ENCODE measurements at regions of chr20 and their contacts with region 1.

Region 1: DNA sequence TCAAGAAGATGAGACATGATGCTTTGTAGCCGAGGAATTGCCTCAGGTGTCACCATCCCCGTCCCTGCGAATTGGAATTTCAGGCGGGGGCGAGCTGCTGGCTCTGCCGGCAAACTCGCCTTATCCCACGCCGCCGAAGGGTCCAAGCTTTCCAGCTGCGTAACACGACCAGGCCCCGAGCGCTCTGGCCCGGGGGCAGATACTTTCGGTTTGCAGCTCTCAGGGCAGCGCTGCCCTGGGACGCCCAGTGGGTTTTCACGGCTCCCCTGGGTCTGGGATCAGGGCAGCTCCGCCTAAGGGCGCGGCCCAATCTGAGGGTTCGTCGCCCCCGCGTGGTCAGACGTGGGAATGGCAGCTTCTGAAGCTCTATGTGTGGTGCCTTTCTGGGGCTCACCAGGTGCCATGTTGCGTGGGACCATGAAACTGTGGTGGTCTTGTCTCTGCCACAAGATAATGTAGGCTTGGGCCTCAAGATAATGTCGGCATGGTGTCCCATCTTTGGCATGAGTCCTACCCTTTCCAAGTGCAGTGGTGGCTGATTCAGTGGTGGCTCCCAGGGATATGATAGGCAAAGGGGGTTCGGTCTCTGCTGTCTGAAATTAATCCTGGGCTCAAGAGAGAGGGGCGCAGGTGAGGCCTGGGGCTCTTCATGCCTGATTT is 20.9 kb downstream of the PIGT start:
- DNase-seq: peak; percentile 91
- H3K4me3 Mint-ChIP-seq: peak overlapping the region; percentile 64
- H3K27ac Mint-ChIP-seq: no peak overlapping the region
- H3K4me1 Mint-ChIP-seq: peaks cover 10% of the 10 kb centered on the region
- H3K27me3 Mint-ChIP-seq: no peaks in the 10 kb centered on the region

Region 2: GRCh38 chr20:45311589-45312211 is 125.2 kb before region 1 on chr20:
- CTCF ChIA-PET with region 1: interaction called, 116 read pairs
- intact Hi-C with region 1: no loop called
- DNase-seq: peak; percentile 73
- H3K4me3 Mint-ChIP-seq: no peak overlapping the region
- H3K27ac Mint-ChIP-seq: no peak overlapping the region
- H3K4me1 Mint-ChIP-seq: peaks cover 10% of the 10 kb centered on the region
- H3K27me3 Mint-ChIP-seq: peaks cover 54% of the 10 kb centered on the region

Region 3: GRCh38 chr20:45347936-45348778 is 88.7 kb before region 1 on chr20 and contains the start of gene SDC4:
- CTCF ChIA-PET with region 1: interaction called, 20 read pairs
- intact Hi-C with region 1: no loop called
- DNase-seq: peak; percentile 68
- H3K4me3 Mint-ChIP-seq: peak within 1 kb of the TSS; percentile 80
- H3K27ac Mint-ChIP-seq: peak within 1 kb of the TSS; percentile 77
- H3K4me1 Mint-ChIP-seq: peaks cover 38% of the 10 kb centered on the region
- H3K27me3 Mint-ChIP-seq: no peaks in the 10 kb centered on the region
- total RNA-seq, gene SDC4: 28.4 to 31.4 TPM

Region 4: GRCh38 chr20:45415774-45416637 is 20.9 kb before region 1 on chr20 and contains the start of gene PIGT:
- CTCF ChIA-PET with region 1: interaction called, 9 read pairs
- intact Hi-C with region 1: loop called (anchors 1 kb)
- DNase-seq: peak; percentile 92
- H3K4me3 Mint-ChIP-seq: peak within 1 kb of the TSS; percentile 93
- H3K27ac Mint-ChIP-seq: peak within 1 kb of the TSS; percentile 97
- H3K4me1 Mint-ChIP-seq: peaks cover 42% of the 10 kb centered on the region
- H3K27me3 Mint-ChIP-seq: no peaks in the 10 kb centered on the region
- total RNA-seq, gene PIGT: 37.7 to 43.8 TPM

Region 5: GRCh38 chr20:45450097-45450818 is 13.4 kb after region 1 on chr20:
- CTCF ChIA-PET with region 1: interaction called, 27 read pairs
- intact Hi-C with region 1: no loop called
- DNase-seq: peak; percentile 30
- H3K4me3 Mint-ChIP-seq: no peak overlapping the region
- H3K27ac Mint-ChIP-seq: no peak overlapping the region
- H3K4me1 Mint-ChIP-seq: no peaks in the 10 kb centered on the region
- H3K27me3 Mint-ChIP-seq: no peaks in the 10 kb centered on the region

Region 6: GRCh38 chr20:45495501-45495941 is 58.7 kb after region 1 on chr20:
- CTCF ChIA-PET with region 1: no interaction called
- intact Hi-C with region 1: loop called (anchors 10 kb)
- DNase-seq: no peak
- H3K4me3 Mint-ChIP-seq: no peak overlapping the region
- H3K27ac Mint-ChIP-seq: no peak overlapping the region
- H3K4me1 Mint-ChIP-seq: no peaks in the 10 kb centered on the region
- H3K27me3 Mint-ChIP-seq: peaks cover 18% of the 10 kb centered on the region

Measured in activated naive CD4-positive, alpha-beta T cell treated with anti-CD3 and anti-CD28 coated beads for 36 hours (primary cell).